Activated CD4-positive, alpha-beta T cell treated with anti-CD3 and anti-CD28 coated beads for 36 hours (primary cell): ENCODE measurements at regions of chr11 and their contacts with region 1.

Region 1: DNA sequence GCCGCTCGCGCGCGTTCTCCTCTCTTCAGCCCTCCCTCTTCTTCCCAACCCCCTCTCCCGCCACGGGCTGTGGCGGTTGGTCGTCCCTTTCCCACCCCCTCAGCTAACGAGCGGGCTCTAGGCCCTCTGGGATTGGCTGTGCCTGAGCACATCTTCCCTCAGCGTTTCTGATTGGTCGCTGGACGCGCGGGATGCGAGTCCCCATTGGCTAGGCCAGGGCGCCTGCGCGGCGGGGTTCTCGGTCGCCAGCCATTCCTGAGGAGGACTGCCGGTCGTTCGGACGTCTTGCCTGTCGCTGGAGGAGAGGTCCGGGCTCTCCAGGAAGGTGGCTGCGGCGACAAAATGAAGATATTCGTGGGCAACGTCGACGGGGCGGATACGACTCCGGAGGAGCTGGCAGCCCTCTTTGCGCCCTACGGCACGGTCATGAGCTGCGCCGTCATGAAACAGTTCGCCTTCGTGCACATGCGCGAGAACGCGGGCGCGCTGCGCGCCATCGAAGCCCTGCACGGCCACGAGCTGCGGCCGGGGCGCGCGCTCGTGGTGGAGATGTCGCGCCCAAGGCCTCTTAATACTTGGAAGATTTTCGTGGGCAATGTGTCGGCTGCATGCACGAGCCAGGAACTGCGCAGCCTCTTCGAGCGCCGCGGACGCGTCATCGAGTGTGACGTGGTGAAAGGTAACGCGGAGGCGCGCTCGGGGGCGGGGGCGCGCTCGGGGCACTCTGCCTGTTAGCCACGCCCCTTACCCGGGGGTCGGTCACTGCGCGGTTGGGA is at the start of gene RBM14:
- DNase-seq: peak; percentile 99
- ATAC-seq: peak; percentile 98
- H3K4me3 Mint-ChIP-seq: peak within 1 kb of the TSS; percentile 89
- H3K27ac Mint-ChIP-seq: peak within 1 kb of the TSS; percentile 97
- H3K4me1 Mint-ChIP-seq: peaks cover 31% of the 10 kb centered on the region
- H3K27me3 Mint-ChIP-seq: no peaks in the 10 kb centered on the region
- total RNA-seq, gene RBM14: 122 to 137 TPM

Region 2: GRCh38 chr11:66302656-66303055 is 313.9 kb before region 1 on chr11:
- CTCF ChIA-PET with region 1: no interaction called
- POLR2A ChIA-PET with region 1: no interaction called
- intact Hi-C with region 1: no loop called
- DNase-seq: no peak
- ATAC-seq: no peak
- H3K4me3 Mint-ChIP-seq: no peak overlapping the region
- H3K27ac Mint-ChIP-seq: no peak overlapping the region
- H3K4me1 Mint-ChIP-seq: no peaks in the 10 kb centered on the region
- H3K27me3 Mint-ChIP-seq: no peaks in the 10 kb centered on the region

Region 3: DNA sequence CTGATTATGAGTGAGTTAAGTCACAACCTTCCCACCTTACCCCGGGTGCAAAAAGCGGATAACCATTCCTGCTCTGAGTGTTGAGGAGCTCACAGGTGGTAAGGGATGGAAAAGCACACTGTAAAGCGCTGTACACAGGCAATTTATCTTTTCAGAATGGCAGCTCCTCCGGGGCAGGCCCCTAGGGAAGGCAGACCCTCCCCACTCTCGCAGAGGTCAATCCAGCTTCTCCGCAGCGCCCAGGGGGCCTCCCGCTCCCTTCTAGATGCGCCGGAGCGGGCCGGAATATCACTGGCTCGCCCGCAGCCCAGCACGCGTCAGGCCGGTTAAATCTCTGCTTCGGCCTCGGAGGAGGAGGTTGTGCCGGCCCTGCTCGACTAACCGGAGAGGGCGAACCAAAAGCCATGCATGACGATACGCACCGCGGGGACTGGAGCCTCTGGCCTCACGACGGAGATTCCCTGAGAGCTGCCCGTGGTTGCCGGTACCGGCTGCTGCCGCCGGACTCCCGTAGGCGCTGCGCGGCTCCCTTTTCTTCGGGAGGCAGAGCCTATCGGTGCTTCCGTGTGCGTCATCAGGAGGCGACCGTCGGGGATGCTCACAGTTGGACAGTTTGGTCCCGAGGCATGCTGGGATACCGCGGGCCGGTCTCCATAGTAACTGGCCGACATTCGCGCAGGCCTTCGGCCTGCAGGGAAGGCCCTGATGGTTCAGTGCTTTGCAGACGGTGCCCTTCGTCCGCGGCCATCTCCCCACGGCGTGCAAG is 271.8 kb before region 1 on chr11 and contains the start of gene BRMS1:
- CTCF ChIA-PET with region 1: no interaction called
- POLR2A ChIA-PET with region 1: no interaction called
- intact Hi-C with region 1: loop called in 1 of 2 experiments (anchors 2 kb)
- DNase-seq: peak; percentile 98
- ATAC-seq: peak; percentile 80
- H3K4me3 Mint-ChIP-seq: peak within 1 kb of the TSS; percentile 93
- H3K27ac Mint-ChIP-seq: peak within 1 kb of the TSS; percentile 90
- H3K4me1 Mint-ChIP-seq: peaks cover 45% of the 10 kb centered on the region
- H3K27me3 Mint-ChIP-seq: peaks cover 3% of the 10 kb centered on the region
- total RNA-seq, gene BRMS1: 29.2 to 30.2 TPM

Region 4: DNA sequence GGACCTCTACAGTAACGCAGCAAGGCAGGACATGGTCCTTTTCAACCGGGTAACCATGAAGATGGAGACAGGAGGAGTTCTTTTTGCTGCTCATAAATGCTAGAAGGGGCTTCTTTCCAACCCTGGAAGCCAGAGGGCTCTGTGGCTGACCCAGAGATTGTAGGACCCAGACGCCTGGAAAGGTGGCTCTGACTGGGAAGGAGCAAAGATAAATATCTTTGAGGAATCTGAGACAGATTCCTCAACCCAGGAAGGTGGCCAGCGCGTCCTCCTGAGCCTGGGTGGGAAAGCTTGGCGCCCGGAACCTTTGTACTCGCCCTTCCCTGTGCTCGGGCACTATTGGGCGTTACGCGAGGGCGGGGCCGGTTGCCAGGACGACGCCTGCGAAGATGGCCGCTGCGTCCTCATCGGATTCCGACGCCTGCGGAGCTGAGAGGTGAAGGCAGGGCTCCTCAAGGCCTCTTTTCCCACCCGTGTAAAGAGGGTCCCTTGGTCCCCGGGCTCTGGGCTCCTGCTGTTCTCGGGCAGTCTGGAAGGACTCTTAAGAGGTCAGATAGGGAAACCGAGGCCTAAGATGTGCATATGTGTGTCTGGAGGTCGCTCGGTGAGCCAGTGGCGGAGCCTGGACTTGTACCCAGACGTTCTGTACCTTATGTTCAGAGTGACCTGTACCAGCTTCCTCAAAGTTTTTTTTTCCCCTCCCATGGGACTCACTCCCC is 106.1 kb before region 1 on chr11 and contains the start of gene BBS1:
- CTCF ChIA-PET with region 1: no interaction called
- POLR2A ChIA-PET with region 1: interaction called, 4 read pairs
- intact Hi-C with region 1: loop called in 1 of 2 experiments (anchors 1 kb)
- DNase-seq: peak; percentile 88
- ATAC-seq: peak; percentile 98
- H3K4me3 Mint-ChIP-seq: peak within 1 kb of the TSS; percentile 86
- H3K27ac Mint-ChIP-seq: peak within 1 kb of the TSS; percentile 48
- H3K4me1 Mint-ChIP-seq: peaks cover 10% of the 10 kb centered on the region
- H3K27me3 Mint-ChIP-seq: no peaks in the 10 kb centered on the region
- total RNA-seq, gene BBS1: 9.4 to 10.7 TPM

Region 5: GRCh38 chr11:66603072-66603471 is 13.5 kb before region 1 on chr11:
- CTCF ChIA-PET with region 1: interaction called, 5 read pairs
- POLR2A ChIA-PET with region 1: interaction called, 10 read pairs
- intact Hi-C with region 1: no loop called
- DNase-seq: no peak
- ATAC-seq: no peak
- H3K4me3 Mint-ChIP-seq: no peak overlapping the region
- H3K27ac Mint-ChIP-seq: no peak overlapping the region
- H3K4me1 Mint-ChIP-seq: no peaks in the 10 kb centered on the region
- H3K27me3 Mint-ChIP-seq: no peaks in the 10 kb centered on the region

Region 6: DNA sequence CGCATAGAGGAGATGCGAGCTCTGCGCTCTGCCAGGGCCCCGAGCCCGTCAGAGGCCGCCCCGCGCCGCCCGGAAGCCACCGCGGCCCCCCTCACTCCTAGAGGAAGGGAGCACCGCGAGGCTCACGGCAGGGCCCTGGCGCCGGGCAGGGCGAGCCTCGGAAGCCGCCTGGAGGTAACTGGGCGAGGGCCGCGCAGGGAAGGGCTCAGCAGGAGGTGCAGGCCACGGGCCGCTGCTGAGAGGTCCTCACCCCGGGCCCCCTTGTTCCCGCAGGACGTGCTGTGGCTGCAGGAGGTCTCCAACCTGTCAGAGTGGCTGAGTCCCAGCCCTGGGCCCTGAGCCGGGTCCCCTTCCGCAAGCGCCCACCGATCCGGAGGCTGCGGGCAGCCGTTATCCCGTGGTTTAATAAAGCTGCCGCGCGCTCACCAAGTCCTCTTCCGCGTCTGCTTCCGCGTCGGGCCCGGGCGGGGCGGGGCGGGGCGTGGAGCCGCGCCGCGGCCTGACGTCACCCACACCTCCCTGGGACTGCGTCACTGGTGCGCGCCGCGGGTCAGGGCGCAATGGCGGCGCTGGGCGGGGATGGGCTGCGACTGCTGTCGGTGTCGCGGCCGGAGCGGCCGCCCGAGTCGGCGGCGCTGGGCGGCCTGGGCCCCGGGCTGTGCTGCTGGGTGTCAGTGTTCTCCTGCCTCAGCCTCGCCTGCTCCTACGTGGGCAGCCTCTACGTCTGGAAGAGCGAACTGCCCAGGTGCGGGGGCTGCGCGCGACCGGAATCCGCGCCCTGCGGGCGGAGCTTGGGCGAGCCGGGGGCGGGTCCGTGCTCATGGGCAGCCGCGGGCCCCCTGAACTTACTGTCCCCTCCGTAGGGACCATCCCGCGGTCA is 226.6 kb after region 1 on chr11 and contains the start of gene RCE1:
- CTCF ChIA-PET with region 1: no interaction called
- POLR2A ChIA-PET with region 1: interaction called, 3 read pairs
- intact Hi-C with region 1: loop called in 1 of 2 experiments (anchors 1 kb)
- DNase-seq: peak; percentile 95
- ATAC-seq: peak; percentile 85
- H3K4me3 Mint-ChIP-seq: peak within 1 kb of the TSS; percentile 92
- H3K27ac Mint-ChIP-seq: peak within 1 kb of the TSS; percentile 92
- H3K4me1 Mint-ChIP-seq: peaks cover 51% of the 10 kb centered on the region
- H3K27me3 Mint-ChIP-seq: no peaks in the 10 kb centered on the region
- total RNA-seq, gene RCE1: 24.9 to 25.6 TPM

Region 7: DNA sequence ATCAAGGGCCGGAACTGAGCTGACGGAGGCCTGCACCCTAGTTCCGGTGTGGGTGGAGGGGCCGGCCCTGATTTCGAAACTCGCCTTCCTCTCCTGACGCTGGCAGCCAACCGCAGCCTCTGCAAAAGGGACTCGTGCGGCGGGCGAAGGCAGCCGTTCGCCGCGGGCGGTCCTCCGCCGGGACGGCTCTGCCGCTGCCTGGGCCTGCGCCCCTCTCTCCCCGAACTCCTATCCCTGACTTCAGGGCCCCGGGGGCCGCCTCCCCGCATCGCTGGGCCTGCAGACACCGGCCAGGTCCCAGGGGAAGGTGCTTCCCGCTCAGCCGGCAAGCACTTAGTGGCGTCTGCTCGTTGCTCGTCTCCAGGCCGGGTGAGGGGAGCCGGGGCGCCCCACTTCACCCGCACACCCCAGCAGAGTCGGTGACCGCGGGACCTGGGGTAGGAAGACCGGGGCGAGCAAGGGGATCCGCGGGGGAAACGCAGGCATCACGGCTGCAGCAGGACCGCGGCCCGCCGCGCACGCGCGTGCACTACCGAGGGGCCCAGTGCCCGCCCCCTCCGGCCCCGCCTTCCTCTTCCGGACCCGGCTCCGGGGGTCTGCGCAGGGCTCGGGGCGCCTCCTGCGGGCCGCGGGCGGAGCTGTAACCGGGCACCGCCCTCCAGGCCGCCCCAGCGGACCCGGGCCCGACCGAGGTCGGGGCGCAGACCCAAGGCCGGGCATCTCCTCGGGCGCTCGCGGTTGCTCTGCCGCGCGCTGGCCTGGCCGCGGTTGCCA is 672.1 kb after region 1 on chr11:
- CTCF ChIA-PET with region 1: no interaction called
- POLR2A ChIA-PET with region 1: no interaction called
- intact Hi-C with region 1: loop called in 1 of 2 experiments (anchors 2 kb)
- DNase-seq: peak; percentile 95
- ATAC-seq: peak; percentile 62
- H3K4me3 Mint-ChIP-seq: peak overlapping the region; percentile 64
- H3K27ac Mint-ChIP-seq: peak overlapping the region; percentile 97
- H3K4me1 Mint-ChIP-seq: peaks cover 56% of the 10 kb centered on the region
- H3K27me3 Mint-ChIP-seq: no peaks in the 10 kb centered on the region